ENCODE measurements at regions of chr9 and their contacts with region 1.

Region 1: DNA sequence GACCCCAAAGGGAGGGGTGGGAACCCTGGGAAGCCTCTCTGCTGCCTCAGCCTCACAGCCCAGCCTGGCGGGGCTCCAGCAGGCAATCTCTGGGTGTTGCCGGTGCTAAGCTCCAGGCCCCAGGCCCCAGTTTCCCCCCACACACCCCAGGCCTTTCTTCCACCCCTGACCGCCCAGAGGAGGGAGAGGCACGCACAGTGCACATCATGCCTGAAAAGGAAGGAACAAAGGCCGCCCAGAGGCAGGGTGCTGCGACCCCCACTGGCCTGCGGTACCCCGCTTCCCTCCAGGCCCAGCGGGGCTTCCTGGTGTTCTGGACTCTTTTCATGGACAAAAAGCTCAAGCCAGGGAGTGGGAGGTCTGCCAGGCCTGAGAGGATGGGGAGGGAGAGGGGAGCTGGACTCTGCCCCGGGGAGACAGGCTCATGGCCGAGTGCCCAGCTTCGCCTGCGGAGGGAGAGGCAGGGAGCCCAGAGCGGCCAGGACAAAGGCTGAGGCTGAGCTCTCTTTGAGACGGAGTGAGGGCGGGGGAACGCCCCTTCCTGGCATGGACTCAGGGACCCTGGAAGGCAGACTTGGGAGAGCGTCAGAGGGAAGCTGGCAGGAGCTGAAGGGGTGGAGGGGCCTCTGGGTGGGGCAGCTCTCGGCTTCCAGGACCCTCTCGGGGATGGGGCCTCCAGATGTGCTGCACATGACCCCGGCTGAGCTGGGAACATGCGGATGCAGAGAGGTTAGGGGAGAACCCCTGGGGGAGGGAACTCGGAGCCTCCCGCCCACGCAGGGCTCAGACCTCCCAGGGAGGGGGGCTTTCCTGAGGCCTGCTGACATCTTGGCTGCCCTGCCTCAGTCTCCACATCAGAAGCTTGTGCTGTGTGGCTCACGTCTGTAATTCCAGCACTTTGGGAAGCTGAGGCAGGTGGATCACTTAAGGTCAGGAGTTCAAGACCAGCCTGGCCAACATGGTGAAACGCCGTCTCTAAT is 1.8 kb upstream of the ENTPD2 start:
- DNase-seq: no peak
- H3K4me3 Mint-ChIP-seq: no peak overlapping the region
- H3K27ac Mint-ChIP-seq: no peak overlapping the region
- H3K4me1 Mint-ChIP-seq: no peaks in the 10 kb centered on the region
- H3K27me3 Mint-ChIP-seq: peaks cover 16% of the 10 kb centered on the region

Region 2: GRCh38 chr9:137070201-137070905 is 14.7 kb after region 1 on chr9 and contains the start of gene SAPCD2:
- CTCF ChIA-PET with region 1: interaction called, 15 read pairs
- POLR2A ChIA-PET with region 1: interaction called, 8 read pairs
- DNase-seq: peak; percentile 90
- H3K4me3 Mint-ChIP-seq: peak within 1 kb of the TSS; percentile 73
- H3K27ac Mint-ChIP-seq: peak within 1 kb of the TSS; percentile 63
- H3K4me1 Mint-ChIP-seq: peaks cover 37% of the 10 kb centered on the region
- H3K27me3 Mint-ChIP-seq: no peaks in the 10 kb centered on the region
- total RNA-seq, gene SAPCD2: 26.8 to 27.0 TPM

Region 3: GRCh38 chr9:137302176-137302994 is 246.7 kb after region 1 on chr9 and contains the start of gene NRARP:
- CTCF ChIA-PET with region 1: no interaction called
- POLR2A ChIA-PET with region 1: no interaction called
- DNase-seq: peak; percentile 90
- H3K4me3 Mint-ChIP-seq: peak within 1 kb of the TSS; percentile 48
- H3K27ac Mint-ChIP-seq: no peak within 1 kb of the TSS
- H3K4me1 Mint-ChIP-seq: peaks cover 19% of the 10 kb centered on the region
- H3K27me3 Mint-ChIP-seq: peaks cover 29% of the 10 kb centered on the region
- total RNA-seq, gene NRARP: 0.71 to 0.75 TPM

Region 4: DNA sequence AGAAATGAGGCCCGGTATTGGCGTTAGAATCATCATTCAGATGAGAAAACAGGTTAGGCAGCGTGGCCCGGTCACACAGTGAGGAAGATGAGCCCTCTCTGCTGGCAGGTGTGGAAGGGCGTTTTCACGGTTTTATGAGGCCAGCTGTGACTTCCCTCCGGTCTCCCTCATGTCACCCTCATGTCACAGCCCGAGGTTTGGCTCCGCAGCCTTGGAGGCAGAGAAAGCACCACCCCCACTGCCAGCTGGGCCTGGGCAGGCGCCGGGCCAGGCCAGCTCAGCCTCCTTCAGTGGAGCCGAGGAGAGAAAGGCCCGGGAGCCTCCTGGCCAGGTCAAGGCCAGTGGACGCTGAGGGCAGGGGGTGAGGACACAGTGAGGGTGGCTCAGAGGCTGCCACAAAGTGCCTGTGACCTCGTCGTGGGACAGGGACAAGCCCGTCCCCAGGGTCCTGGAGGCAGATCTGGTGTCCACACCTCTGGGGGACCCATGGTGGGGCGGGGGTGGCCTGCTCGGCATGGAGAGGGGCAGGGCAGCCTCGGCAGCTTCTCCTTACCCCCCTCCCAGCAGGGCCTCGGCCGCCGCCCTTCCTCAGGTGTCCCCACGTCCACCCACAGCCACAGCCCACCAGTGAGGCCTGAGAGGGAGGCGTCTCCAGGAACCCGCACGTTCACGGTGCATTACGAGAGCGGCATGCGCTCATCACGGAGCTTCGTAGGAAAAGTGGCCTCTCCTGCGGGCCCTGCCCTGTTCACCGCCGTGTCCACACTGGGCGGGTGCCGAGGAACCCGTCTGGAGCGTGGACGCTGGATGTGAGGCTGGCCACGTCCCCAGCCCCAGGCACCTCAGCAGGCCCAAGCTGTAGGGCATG is 335.1 kb after region 1 on chr9:
- CTCF ChIA-PET with region 1: no interaction called
- POLR2A ChIA-PET with region 1: no interaction called
- DNase-seq: no peak
- H3K4me3 Mint-ChIP-seq: no peak overlapping the region
- H3K27ac Mint-ChIP-seq: no peak overlapping the region
- H3K4me1 Mint-ChIP-seq: peaks cover 11% of the 10 kb centered on the region
- H3K27me3 Mint-ChIP-seq: no peaks in the 10 kb centered on the region